ENCODE measurements at regions of chr16 and their contacts with region 1.

Region 1: GRCh38 chr16:22001591-22001990 is 675 bp upstream of the PDZD9 start:
- DNase-seq: no peak
- H3K4me3 ChIP-seq: no peak overlapping the region
- H3K27ac ChIP-seq: no peak overlapping the region
- H3K4me1 ChIP-seq: peaks cover 2 to 5% of the 10 kb centered on the region in 2 donors
- H3K27me3 ChIP-seq: no peaks in the 10 kb centered on the region
- CTCF ChIP-seq: no peak
- POLR2A ChIP-seq: no peak

Region 2: GRCh38 chr16:22077700-22078313 is 76.2 kb after region 1 on chr16:
- intact Hi-C with region 1: loop called (anchors 5 kb)
- DNase-seq: peak; percentile 65
- H3K4me3 ChIP-seq: no peak overlapping the region
- H3K27ac ChIP-seq: no peak overlapping the region
- H3K4me1 ChIP-seq: peaks cover 5 to 9% of the 10 kb centered on the region in 2 donors
- H3K27me3 ChIP-seq: no peaks in the 10 kb centered on the region
- CTCF ChIP-seq: peak; percentile 59 to 86 (median 68)
- POLR2A ChIP-seq: no peak

Region 3: GRCh38 chr16:22098405-22099255 is 97.0 kb after region 1 on chr16:
- intact Hi-C with region 1: loop called (anchors 5 kb)
- DNase-seq: no peak
- H3K4me3 ChIP-seq: no peak overlapping the region
- H3K27ac ChIP-seq: no peak overlapping the region
- H3K4me1 ChIP-seq: no peaks in the 10 kb centered on the region
- H3K27me3 ChIP-seq: no peaks in the 10 kb centered on the region
- CTCF ChIP-seq: peak in 5 of 6 experiments; percentile 35 to 67 (median 66)
- POLR2A ChIP-seq: no peak

Region 4: GRCh38 chr16:22188595-22189442 is 187.2 kb after region 1 on chr16:
- intact Hi-C with region 1: loop called (anchors 5 kb)
- DNase-seq: peak; percentile 67 to 75
- H3K4me3 ChIP-seq: no peak overlapping the region
- H3K27ac ChIP-seq: peak overlapping the region; percentile 64 to 98 (median 91)
- H3K4me1 ChIP-seq: peaks cover 20 to 28% of the 10 kb centered on the region in 2 donors
- H3K27me3 ChIP-seq: no peaks in the 10 kb centered on the region
- CTCF ChIP-seq: peak; percentile 45 to 94 (median 88)
- POLR2A ChIP-seq: no peak